ENCODE measurements at regions of chr7 and their contacts with region 1.

Region 1: GRCh38 chr7:157432957-157433576 is 96.3 kb downstream of the DNAJB6 start:
- DNase-seq: peak; percentile 80
- ATAC-seq: peak; percentile 69
- H3K4me3 Mint-ChIP-seq: peak overlapping the region; percentile 52
- H3K27ac Mint-ChIP-seq: no peak overlapping the region
- H3K4me1 Mint-ChIP-seq: peaks cover 13% of the 10 kb centered on the region
- H3K27me3 Mint-ChIP-seq: no peaks in the 10 kb centered on the region
- CTCF ChIP-seq: peak; percentile 85

Region 2: DNA sequence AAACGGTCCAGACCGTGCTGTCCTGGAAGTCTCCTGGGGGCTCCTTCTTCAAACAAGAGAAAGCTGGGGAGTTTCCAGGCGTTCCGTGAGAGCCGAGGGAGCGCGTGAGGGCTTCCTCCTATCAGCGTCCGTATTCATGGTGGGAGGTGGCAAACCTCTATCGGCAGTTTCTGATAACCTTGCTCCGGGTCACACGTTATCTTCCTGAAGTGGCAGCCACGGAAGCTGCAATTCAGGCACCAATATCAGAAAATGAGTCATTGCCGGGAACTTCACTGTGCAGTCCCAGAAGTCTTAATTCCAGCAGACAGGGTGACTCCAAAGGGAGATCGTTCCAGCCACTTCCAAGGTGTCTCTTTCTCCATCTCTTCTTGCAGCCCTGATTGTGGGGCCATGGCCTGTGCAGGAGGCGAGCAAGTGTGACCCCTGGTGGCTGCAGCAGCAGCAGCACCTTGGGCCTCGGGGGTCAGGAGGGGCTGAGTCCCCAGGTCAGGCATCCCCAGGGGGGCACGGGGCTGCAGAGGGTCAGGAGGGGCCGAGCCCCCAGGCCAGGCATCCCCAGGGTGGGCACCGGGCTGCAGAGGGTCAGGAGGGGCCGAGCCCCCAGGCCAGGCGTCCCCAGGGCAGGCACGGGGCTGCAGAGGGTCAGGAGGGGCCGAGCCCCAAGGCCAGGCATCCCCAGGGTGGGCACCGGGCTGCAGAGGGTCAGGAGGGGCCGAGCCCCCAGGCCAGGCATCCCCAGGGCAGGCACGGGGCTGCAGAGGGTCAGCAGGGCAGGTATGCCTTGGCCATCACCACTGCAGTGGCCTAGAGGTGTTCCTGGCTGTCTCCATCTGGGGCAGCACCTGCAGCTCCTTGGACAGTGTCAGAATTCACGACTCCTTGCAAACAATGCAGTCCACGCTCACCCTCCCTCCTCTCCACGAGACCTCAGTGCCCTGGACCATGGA is 442.4 kb after region 1 on chr7:
- CTCF ChIA-PET with region 1: no interaction called
- POLR2A ChIA-PET with region 1: no interaction called
- intact Hi-C with region 1: loop called (anchors 10 kb)
- DNase-seq: peak; percentile 60
- ATAC-seq: peak; percentile 84
- H3K4me3 Mint-ChIP-seq: peak overlapping the region; percentile 64
- H3K27ac Mint-ChIP-seq: no peak overlapping the region
- H3K4me1 Mint-ChIP-seq: peaks cover 23% of the 10 kb centered on the region
- H3K27me3 Mint-ChIP-seq: no peaks in the 10 kb centered on the region
- CTCF ChIP-seq: peak; percentile 83